Aorta (tissue), 5 donors: ENCODE measurements at regions of chr9 and their contacts with region 1.

Region 1: GRCh38 chr9:119556129-119556875 is 187.1 kb upstream of the BRINP1 start:
- DNase-seq: peak; percentile 81 to 92
- ATAC-seq: peak; percentile 93
- H3K4me3 ChIP-seq: no peak overlapping the region
- H3K27ac ChIP-seq: peak overlapping the region in 1 of 2 donors; percentile 7
- H3K4me1 ChIP-seq: no peaks in the 10 kb centered on the region
- H3K27me3 ChIP-seq: no peaks in the 10 kb centered on the region

Region 2: GRCh38 chr9:119004620-119004994 is 551.7 kb before region 1 on chr9:
- intact Hi-C with region 1: no loop called
- DNase-seq: peak; percentile 76 to 82
- ATAC-seq: peak; percentile 92
- H3K4me3 ChIP-seq: no peak overlapping the region
- H3K27ac ChIP-seq: peak overlapping the region; percentile 94 to 95
- H3K4me1 ChIP-seq: peaks cover 0 to 3% of the 10 kb centered on the region in 2 donors
- H3K27me3 ChIP-seq: no peaks in the 10 kb centered on the region

Region 3: DNA sequence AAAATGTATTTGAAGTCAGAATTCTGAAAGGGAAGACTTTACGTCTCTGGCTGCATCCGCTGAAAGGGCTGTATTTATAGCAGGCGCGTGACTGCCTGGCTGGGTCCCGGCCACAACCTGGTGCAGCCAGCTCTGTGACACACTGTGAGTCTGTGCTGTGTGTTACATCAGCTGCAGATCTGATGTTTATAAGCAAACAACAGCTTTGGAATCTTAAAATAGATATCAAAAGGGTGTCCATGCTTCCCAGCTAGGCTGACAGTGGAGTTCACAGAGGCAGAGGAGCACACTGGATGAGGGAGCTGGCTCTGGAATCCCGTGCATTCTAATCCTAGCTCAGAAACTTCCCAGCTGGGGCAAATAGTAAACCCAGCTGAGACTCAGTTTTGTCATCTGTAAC is 246.3 kb after region 1 on chr9:
- intact Hi-C with region 1: no loop called
- DNase-seq: peak; percentile 74 to 83
- ATAC-seq: peak; percentile 82
- H3K4me3 ChIP-seq: no peak overlapping the region
- H3K27ac ChIP-seq: peak overlapping the region in 1 of 2 donors; percentile 30
- H3K4me1 ChIP-seq: no peaks in the 10 kb centered on the region
- H3K27me3 ChIP-seq: no peaks in the 10 kb centered on the region

Region 4: GRCh38 chr9:119968836-119969707 is 412.8 kb after region 1 on chr9:
- intact Hi-C with region 1: loop called (anchors 2 to 5 kb)
- DNase-seq: peak; percentile 87 to 91
- ATAC-seq: peak; percentile 89
- H3K4me3 ChIP-seq: no peak overlapping the region
- H3K27ac ChIP-seq: no peak overlapping the region
- H3K4me1 ChIP-seq: peaks cover 0 to under 1% of the 10 kb centered on the region in 2 donors
- H3K27me3 ChIP-seq: no peaks in the 10 kb centered on the region